ENCODE measurements at regions of chr16 and their contacts with region 1.

Region 1: GRCh38 chr16:28277537-28278388 is 14.6 kb upstream of the SBK1 start:
- DNase-seq: peak; percentile 60 to 95 (median 87)

Region 2: DNA sequence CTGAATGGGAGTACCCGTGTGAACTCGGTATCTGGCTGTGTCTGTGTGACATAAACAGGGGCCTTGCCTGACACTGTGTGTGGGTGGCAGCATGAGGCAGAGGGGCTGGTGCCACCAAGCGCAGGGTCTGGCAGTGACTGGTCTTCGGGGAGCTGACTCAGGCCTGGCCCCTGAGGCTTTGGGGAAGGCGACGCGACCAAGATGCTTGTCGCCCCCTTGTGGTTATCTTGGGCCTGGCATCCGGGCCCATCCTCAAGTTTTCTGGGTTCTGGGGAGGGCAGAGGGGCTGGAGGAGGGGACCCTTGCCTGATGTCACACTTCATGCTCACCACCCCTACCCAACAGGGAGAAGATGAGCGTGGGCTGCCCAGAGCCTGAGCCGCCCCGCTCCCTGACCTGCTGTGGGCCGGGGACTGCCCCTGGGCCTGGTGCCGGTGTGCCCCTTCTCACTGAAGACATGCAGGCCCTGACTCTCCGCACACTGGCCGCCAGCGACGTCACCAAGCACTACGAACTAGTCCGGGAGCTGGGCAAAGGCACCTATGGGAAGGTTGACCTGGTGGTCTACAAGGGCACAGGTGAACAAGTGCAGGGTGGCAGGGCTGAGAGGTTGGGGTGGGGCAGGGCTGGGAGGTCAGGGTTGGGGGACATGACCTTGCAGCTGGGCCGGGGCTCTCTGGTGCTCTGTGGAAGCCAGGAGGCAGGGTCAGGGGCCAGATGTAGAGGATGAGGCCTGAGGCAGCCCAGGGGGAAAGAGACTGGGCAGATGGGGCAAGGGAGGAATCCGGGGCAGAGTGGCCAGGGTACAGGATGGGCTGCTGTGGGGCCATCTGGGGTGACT is 39.5 kb after region 1 on chr16:
- intact Hi-C with region 1: loop called (anchors 5 kb)
- DNase-seq: peak; percentile 30 to 86 (median 65)

Region 3: GRCh38 chr16:28999577-28999976 is 721.8 kb after region 1 on chr16:
- intact Hi-C with region 1: no loop called
- DNase-seq: no peak

Region 4: DNA sequence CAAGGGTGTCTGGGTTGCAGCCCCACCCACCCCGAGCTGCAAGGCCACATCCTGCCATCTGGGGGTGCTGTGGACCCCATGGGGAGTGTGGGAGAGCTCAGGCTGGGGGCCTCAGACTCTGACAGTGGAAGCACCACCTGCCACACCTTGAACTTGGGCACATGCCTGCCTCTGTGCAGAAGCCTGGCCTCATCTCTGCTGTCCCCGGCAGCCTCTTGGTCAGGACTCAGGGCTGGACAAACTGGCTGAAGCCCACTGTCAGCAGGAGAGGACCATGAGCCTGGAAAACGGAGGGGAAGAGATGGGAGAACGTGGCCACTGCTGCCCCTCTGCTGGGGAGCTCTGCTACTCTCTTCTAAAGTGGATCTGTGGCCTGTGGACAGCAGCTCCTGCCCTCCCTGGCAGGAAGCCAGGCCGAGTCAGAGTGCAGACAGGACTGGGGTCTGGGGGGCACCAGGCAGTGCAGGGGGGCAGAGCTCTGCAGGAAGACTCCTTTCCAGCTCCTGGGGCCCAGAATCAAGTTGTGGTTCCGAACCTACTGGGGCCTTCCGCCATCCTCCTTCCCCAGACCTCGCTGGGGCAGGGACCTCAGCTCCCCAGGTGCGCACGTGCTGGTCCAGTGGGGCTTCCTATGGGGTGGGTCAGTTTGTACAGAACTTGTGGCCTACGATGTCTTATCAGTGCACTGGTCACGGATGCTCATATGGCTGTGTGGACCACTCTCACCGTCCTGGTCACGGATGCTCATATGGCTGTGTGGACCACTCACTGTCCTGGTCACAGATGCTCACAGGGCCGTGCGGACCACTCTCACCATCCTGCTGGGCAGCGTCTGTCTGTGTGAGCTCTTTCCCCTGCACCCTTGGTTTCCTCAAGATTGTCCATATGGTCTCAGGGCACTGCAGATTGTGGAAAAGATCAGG is 914.8 kb after region 1 on chr16:
- intact Hi-C with region 1: no loop called
- DNase-seq: peak in 4 of 42 donors; percentile 8 to 29 (median 23)

Measured in head of caudate nucleus (tissue), 42 donors.